HEK293 (cell line): ENCODE measurements at regions of chr1 and their contacts with region 1.

Region 1: DNA sequence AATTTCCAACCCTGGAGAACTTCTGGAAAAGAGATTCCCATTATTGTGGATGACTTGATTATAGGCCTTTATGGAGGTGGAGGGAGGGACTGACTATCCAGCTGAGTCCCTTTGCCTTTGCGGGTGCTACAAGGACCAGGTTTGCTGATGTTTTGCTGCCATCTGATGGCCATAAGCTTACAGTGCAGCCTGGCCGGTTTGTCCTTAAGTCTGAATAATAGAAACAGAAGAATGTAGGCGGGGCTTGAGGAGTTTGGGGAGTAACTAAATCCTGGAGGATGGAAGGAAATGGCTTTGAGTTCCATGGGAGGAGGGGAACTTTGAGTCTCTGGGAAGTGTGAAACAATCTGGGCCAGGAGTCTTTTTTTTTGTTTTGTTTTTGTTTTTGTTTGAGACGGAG is 55.7 kb upstream of the CD1D start:
- H3K4me3 ChIP-seq: no peak overlapping the region
- H3K27ac ChIP-seq: no peak overlapping the region
- H3K4me1 ChIP-seq: no peaks in the 10 kb centered on the region
- CTCF ChIP-seq: peak; percentile 78

Region 2: GRCh38 chr1:157580179-157580827 is 544.7 kb before region 1 on chr1:
- CTCF ChIA-PET with region 1: interaction called, 11 read pairs
- POLR2A ChIA-PET with region 1: no interaction called
- H3K4me3 ChIP-seq: no peak overlapping the region
- H3K27ac ChIP-seq: no peak overlapping the region
- H3K4me1 ChIP-seq: no peaks in the 10 kb centered on the region
- CTCF ChIP-seq: 0 out of 2 replicates have a peak, but pooled peaks have one; percentile 20

Region 3: DNA sequence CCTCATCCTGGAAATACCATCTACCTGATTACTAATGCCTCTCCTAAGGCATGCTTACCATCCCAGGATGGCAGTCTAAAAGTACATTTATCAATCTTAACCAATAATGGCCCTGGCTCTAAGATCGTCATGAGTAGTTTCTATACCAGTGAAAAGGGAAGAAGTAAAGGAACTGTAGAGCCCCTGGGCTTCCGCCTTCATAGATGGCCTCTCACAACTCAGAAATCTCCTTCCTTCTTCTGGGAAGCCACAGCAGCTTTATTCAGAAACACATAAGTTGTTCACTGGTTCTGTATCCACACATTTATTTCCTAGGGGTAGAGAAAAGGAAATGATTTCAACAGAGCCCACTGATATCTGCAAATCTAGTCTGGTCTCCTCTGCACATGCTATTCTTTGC is 242.4 kb before region 1 on chr1:
- CTCF ChIA-PET with region 1: interaction called, 17 read pairs
- POLR2A ChIA-PET with region 1: no interaction called
- H3K4me3 ChIP-seq: no peak overlapping the region
- H3K27ac ChIP-seq: no peak overlapping the region
- H3K4me1 ChIP-seq: no peaks in the 10 kb centered on the region
- CTCF ChIP-seq: no peak

Region 4: GRCh38 chr1:157963713-157964112 is 161.3 kb before region 1 on chr1:
- CTCF ChIA-PET with region 1: interaction called, 805 read pairs
- POLR2A ChIA-PET with region 1: no interaction called
- H3K4me3 ChIP-seq: no peak overlapping the region
- H3K27ac ChIP-seq: no peak overlapping the region
- H3K4me1 ChIP-seq: no peaks in the 10 kb centered on the region
- CTCF ChIP-seq: peak; percentile 84

Region 5: DNA sequence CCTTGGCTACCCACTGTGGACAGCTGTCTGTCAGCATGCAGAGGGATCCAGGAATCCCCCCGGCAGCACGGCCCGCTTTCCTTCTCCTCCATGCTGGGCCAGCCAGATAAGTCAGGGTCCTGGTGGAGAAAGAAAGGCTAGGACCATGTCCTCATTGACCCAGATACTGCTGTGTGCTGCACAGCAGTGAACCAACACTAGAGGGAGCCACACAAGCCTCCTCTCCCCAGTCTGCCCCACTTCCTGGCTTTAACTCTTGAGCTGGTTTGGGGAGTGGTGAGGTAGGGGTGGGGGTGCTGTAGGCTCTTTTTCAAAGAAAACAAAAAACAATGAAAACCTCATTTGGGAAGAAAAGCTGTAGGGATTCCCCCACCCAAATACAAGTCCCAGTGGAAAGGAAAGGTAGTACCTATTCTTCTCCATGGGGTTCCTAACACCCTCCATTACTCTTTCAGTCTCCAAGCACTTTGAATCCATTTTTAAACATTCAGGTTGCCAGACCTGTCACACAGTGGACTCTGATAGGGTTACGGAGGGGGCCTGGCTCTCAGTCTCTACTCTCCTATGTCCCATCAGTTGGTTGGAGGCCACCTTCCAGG is 29.2 kb before region 1 on chr1:
- CTCF ChIA-PET with region 1: interaction called, 262 read pairs
- POLR2A ChIA-PET with region 1: no interaction called
- H3K4me3 ChIP-seq: no peak overlapping the region
- H3K27ac ChIP-seq: no peak overlapping the region
- H3K4me1 ChIP-seq: no peaks in the 10 kb centered on the region
- CTCF ChIP-seq: peak; percentile 38; the same call in 1 of the 2 replicates

Region 6: GRCh38 chr1:158185770-158186705 is 61.0 kb after region 1 on chr1:
- CTCF ChIA-PET with region 1: no interaction called
- POLR2A ChIA-PET with region 1: no interaction called
- H3K4me3 ChIP-seq: no peak overlapping the region
- H3K27ac ChIP-seq: no peak overlapping the region
- H3K4me1 ChIP-seq: peaks cover 3% of the 10 kb centered on the region; the same call in 1 of the 2 replicates
- CTCF ChIP-seq: no peak